ENCODE measurements at regions of chr9 and their contacts with region 1.

Region 1: DNA sequence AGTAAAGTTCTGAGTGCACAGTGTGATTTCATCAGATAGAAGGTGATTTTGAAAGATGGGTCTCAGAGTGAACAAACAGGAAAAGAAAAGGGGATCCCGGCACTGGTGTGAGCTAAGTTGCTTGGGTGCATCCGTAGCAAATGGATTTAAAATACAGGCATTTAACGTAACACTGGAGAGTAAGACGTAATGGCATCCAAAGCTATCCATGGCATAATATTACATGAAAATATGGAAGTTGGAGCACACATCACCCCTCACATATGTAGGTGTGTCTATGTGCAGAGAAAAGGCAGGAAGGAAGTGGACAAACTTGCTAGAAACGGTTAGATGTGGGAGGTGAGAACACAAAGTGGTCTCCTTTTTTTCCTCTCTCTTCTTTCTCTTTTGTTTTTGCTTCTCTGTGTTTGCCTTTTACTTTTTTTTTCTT is 38.2 kb upstream of the SEMA4D start:
- DNase-seq: peak; percentile 41
- H3K4me3 Mint-ChIP-seq: peak overlapping the region; percentile 30
- H3K27ac Mint-ChIP-seq: peak overlapping the region; percentile 90
- H3K4me1 Mint-ChIP-seq: peaks cover 82% of the 10 kb centered on the region
- H3K27me3 Mint-ChIP-seq: no peaks in the 10 kb centered on the region

Region 2: DNA sequence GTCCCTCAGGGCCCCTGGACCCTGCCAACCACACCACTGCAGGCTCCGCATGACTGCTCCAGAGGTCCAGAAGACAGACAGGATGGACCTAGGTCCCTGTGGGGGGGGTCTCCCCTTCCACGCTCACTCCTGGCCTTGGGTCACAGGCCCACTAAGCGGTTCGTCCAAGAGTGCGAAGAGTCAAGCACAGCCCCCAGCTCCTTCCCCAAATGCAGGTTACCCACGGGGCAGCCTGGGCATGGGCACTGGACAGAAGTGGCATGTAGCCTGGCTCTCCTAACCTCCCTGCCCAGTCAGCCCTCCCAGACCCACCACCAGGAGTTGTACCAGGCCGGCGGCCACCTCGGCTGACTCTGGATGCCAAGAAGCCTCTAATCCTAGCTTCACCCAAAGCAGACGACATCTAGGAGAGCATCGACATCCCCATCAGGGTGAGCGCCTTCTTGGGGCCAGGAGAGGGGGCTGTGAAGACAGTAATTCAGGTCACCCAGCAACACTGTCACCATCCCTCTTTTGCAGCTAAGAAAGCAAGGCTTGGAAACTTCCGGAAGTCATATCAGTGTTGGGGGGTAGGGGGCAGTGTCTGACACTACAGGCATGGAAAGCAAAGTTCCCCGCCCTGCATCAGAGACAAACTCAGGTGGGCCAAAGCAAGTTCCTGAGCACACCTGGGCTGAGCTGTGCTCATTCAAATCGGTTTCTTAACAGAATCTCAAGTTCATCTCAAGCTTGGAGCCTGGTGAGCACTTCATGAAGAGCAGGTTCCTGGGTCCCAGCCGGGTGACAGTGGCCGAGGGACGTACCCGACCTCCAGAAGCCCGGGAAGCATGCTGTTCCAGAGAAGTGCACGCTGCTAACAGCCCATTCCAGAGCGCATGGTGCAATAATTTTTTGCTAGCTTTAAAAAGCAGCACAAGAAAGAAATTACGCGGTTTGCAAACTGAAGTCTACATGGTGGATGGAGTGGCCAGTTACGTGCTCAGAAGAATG is 107.0 kb before region 1 on chr9:
- intact Hi-C with region 1: loop called (anchors 1 kb)
- DNase-seq: no peak
- H3K4me3 Mint-ChIP-seq: no peak overlapping the region
- H3K27ac Mint-ChIP-seq: peak overlapping the region; percentile 100
- H3K4me1 Mint-ChIP-seq: peaks cover 91% of the 10 kb centered on the region
- H3K27me3 Mint-ChIP-seq: no peaks in the 10 kb centered on the region

Region 3: GRCh38 chr9:89477811-89478630 is 58.1 kb before region 1 on chr9:
- intact Hi-C with region 1: loop called (anchors 1 kb)
- DNase-seq: peak; percentile 47
- H3K4me3 Mint-ChIP-seq: peak overlapping the region; percentile 89
- H3K27ac Mint-ChIP-seq: peak overlapping the region; percentile 96
- H3K4me1 Mint-ChIP-seq: peaks cover 90% of the 10 kb centered on the region
- H3K27me3 Mint-ChIP-seq: no peaks in the 10 kb centered on the region

Region 4: DNA sequence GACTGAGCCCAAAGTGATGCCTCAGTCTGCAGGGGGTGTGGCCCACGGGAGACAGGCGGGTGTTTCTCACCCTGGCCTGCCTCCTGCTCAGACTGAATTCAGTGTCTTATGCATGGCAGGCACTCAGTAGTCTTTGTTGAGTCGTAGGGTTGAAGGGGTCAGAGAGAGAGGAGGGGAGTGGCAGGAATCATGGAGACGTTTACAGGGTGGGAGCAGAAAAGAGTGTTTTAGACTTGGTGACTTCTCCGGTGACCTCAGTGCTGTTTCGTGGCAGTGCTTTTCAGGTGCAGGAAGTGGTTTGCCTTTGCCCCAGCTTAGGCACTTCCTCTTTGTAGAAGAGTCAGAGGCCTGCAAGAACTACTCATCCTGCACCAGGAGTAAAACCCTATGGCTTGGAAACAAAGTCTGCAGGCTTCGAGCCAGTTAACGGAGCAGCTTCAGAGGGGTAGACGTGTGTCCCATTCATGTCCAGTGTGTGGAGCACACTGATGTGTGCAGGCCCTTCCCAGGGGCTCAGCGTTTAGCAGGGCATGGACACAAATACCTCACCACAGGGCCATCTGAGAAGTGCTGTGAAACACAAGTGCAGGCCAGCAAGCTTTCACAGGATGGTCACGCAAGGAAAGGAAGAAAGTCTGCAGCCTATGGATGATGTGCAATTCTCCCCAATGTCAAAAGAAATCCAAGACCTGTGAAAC is 13.8 kb before region 1 on chr9:
- intact Hi-C with region 1: loop called (anchors 1 kb)
- DNase-seq: peak; percentile 77
- H3K4me3 Mint-ChIP-seq: peak overlapping the region; percentile 81
- H3K27ac Mint-ChIP-seq: peak overlapping the region; percentile 99
- H3K4me1 Mint-ChIP-seq: peaks cover 91% of the 10 kb centered on the region
- H3K27me3 Mint-ChIP-seq: no peaks in the 10 kb centered on the region

Measured in activated T-helper 1 cell treated with anti-CD3 and anti-CD28 coated beads, Interleukin-12 subunit alpha, Interleukin-12 subunit beta, Interleukin-2, Interleukin-4 antibody, amounts not matched to agents 30 ng/mL and 10 ng/mL and 1 ng/mL, durations not matched to agents 14 hours and 24 hours and 36 hours (primary cell).